ENCODE measurements at regions of chr1 and their contacts with region 1.

Region 1: DNA sequence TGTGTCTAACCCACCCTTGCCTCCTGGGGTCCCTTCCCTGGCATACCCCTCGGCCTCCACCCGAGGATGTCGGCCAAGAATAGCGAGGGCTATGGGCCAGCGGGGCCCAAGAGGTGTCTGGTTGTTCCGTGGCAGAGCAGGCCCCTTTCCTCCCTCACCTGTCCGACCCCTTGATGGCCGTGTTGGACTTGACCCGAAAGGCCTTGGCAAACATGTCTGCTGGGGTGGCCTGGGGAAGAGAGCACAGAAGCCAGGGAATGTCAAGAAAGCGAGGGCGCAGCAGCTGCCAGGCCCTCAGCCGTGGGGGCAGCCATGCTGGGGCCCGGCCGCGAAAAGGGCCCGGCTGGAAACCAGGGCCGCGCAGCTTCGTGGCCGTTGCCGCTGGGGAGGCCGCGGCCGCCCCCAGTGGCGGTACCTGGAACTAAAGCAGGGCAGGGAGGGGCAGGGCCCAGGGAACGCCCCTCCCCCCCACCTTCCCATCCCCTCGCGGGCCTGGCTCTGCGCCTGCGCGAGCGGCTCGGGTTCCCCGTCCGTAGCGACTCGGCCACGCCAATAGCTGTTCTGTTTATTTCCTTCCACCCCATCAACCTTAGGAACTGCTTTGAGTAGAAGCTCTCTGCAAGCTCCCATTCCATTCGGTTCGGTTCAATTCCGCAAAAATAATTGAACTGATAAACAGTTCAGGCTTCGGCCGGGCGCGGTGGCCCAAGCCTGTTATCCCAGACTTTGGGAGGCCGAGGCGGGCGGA is at the start of gene EIF2D:
- DNase-seq: peak; percentile 82 to 96 (median 91)
- ATAC-seq: peak; percentile 97 to 100 (median 98)
- H3K4me3 ChIP-seq: peak within 1 kb of the TSS; percentile 63 to 79
- H3K4me3 Mint-ChIP-seq: peak within 1 kb of the TSS; percentile 91 to 95 (median 92)
- H3K27ac ChIP-seq: peak within 1 kb of the TSS; percentile 71
- H3K27ac Mint-ChIP-seq: peak within 1 kb of the TSS; percentile 91 to 93
- H3K4me1 ChIP-seq: peaks cover 7 to 15% of the 10 kb centered on the region in 2 experiments
- H3K4me1 Mint-ChIP-seq: peaks cover 15 to 23% (median 22%) of the 10 kb centered on the region in 3 donors
- H3K27me3 ChIP-seq: no peaks in the 10 kb centered on the region
- H3K27me3 Mint-ChIP-seq: no peaks in the 10 kb centered on the region
- total RNA-seq, gene EIF2D: 48.0 to 56.7 (median 49.3) TPM

Region 2: GRCh38 chr1:206503591-206504362 is 108.5 kb before region 1 on chr1:
- CTCF ChIA-PET with region 1: no interaction called
- POLR2A ChIA-PET with region 1: interaction called, 3 to 11 read pairs
- DNase-seq: peak in 3 of 35 experiments; percentile 7 to 35 (median 33)
- ATAC-seq: no peak
- H3K4me3 ChIP-seq: no peak overlapping the region
- H3K4me3 Mint-ChIP-seq: no peak overlapping the region
- H3K27ac ChIP-seq: no peak overlapping the region
- H3K27ac Mint-ChIP-seq: peak overlapping the region; percentile 57 to 75
- H3K4me1 ChIP-seq: peaks cover 2 to 38% of the 10 kb centered on the region in 2 experiments
- H3K4me1 Mint-ChIP-seq: peaks cover 18 to 46% (median 39%) of the 10 kb centered on the region in 3 donors
- H3K27me3 ChIP-seq: peaks cover 0 to 10% of the 10 kb centered on the region in 2 experiments
- H3K27me3 Mint-ChIP-seq: peaks cover 0 to 6% of the 10 kb centered on the region in 2 donors

Region 3: GRCh38 chr1:206568779-206569352 is 43.4 kb before region 1 on chr1:
- CTCF ChIA-PET with region 1: no interaction called
- POLR2A ChIA-PET with region 1: no interaction called
- DNase-seq: peak in 2 of 35 experiments; percentile 42
- ATAC-seq: peak in 3 of 4 experiments; percentile 12 to 61 (median 23)
- H3K4me3 ChIP-seq: peak overlapping the region; percentile 4 to 15
- H3K4me3 Mint-ChIP-seq: peak overlapping the region; percentile 66 to 96 (median 68)
- H3K27ac ChIP-seq: peak overlapping the region; percentile 81
- H3K27ac Mint-ChIP-seq: peak overlapping the region; percentile 97 to 99
- H3K4me1 ChIP-seq: peaks cover 81 to 98% of the 10 kb centered on the region in 2 experiments
- H3K4me1 Mint-ChIP-seq: peaks cover 99 to 100% (median 99%) of the 10 kb centered on the region in 3 donors
- H3K27me3 ChIP-seq: no peaks in the 10 kb centered on the region
- H3K27me3 Mint-ChIP-seq: no peaks in the 10 kb centered on the region

Region 4: GRCh38 chr1:206635080-206635977 is 23.0 kb after region 1 on chr1 and contains the start of gene DYRK3:
- CTCF ChIA-PET with region 1: interaction called in 1 of 2 experiments, 23 read pairs
- POLR2A ChIA-PET with region 1: interaction called in 1 of 2 experiments, 5 read pairs
- DNase-seq: peak; percentile 67 to 92 (median 79)
- ATAC-seq: peak; percentile 95 to 96 (median 96)
- H3K4me3 ChIP-seq: peak within 1 kb of the TSS; percentile 51 to 64
- H3K4me3 Mint-ChIP-seq: peak within 1 kb of the TSS; percentile 84 to 89 (median 85)
- H3K27ac ChIP-seq: no peak within 1 kb of the TSS
- H3K27ac Mint-ChIP-seq: peak within 1 kb of the TSS; percentile 34 to 81
- H3K4me1 ChIP-seq: peaks cover 9 to 19% of the 10 kb centered on the region in 2 experiments
- H3K4me1 Mint-ChIP-seq: peaks cover 11 to 21% (median 15%) of the 10 kb centered on the region in 3 donors
- H3K27me3 ChIP-seq: peaks cover 0 to 17% of the 10 kb centered on the region in 2 experiments
- H3K27me3 Mint-ChIP-seq: peaks cover 3 to 11% of the 10 kb centered on the region in 2 donors
- total RNA-seq, gene DYRK3: 0.73 to 2.0 (median 1.6) TPM

Region 5: GRCh38 chr1:206694171-206695124 is 82.1 kb after region 1 on chr1:
- CTCF ChIA-PET with region 1: no interaction called
- POLR2A ChIA-PET with region 1: no interaction called
- DNase-seq: no peak
- ATAC-seq: no peak
- H3K4me3 ChIP-seq: no peak overlapping the region
- H3K4me3 Mint-ChIP-seq: no peak overlapping the region
- H3K27ac ChIP-seq: no peak overlapping the region
- H3K27ac Mint-ChIP-seq: peak overlapping the region in 1 of 2 donors; percentile 36
- H3K4me1 ChIP-seq: peaks cover under 1 to 43% of the 10 kb centered on the region in 2 experiments
- H3K4me1 Mint-ChIP-seq: peaks cover 90 to 96% (median 90%) of the 10 kb centered on the region in 3 donors
- H3K27me3 ChIP-seq: no peaks in the 10 kb centered on the region
- H3K27me3 Mint-ChIP-seq: no peaks in the 10 kb centered on the region

Measured in T-cell (primary cell).